ENCODE measurements at regions of chr4 and their contacts with region 1.

Region 1: GRCh38 chr4:26719954-26720552 is 136.2 kb downstream of the TBC1D19 start:
- DNase-seq: no peak
- H3K4me3 ChIP-seq: no peak overlapping the region
- H3K27ac ChIP-seq: no peak overlapping the region
- H3K4me1 ChIP-seq: no peaks in the 10 kb centered on the region
- H3K27me3 ChIP-seq: no peaks in the 10 kb centered on the region
- CTCF ChIP-seq: peak; percentile 37 to 89 (median 66)
- POLR2A ChIP-seq: no peak

Region 2: GRCh38 chr4:26459054-26459755 is 260.8 kb before region 1 on chr4:
- intact Hi-C with region 1: loop called (anchors 5 to 10 kb)
- DNase-seq: peak in 2 of 7 donors; percentile 25 to 28
- H3K4me3 ChIP-seq: no peak overlapping the region
- H3K27ac ChIP-seq: no peak overlapping the region
- H3K4me1 ChIP-seq: no peaks in the 10 kb centered on the region
- H3K27me3 ChIP-seq: no peaks in the 10 kb centered on the region
- CTCF ChIP-seq: peak; percentile 53 to 67 (median 62)
- POLR2A ChIP-seq: no peak

Region 3: GRCh38 chr4:27248829-27249228 is 528.8 kb after region 1 on chr4:
- intact Hi-C with region 1: no loop called
- DNase-seq: no peak
- H3K4me3 ChIP-seq: no peak overlapping the region
- H3K27ac ChIP-seq: no peak overlapping the region
- H3K4me1 ChIP-seq: no peaks in the 10 kb centered on the region
- H3K27me3 ChIP-seq: no peaks in the 10 kb centered on the region
- CTCF ChIP-seq: no peak
- POLR2A ChIP-seq: no peak

Measured in adrenal gland (tissue), 19 donors.